Activated CD4-positive, alpha-beta T cell treated with anti-CD3 and anti-CD28 coated beads, Interleukin-2, amount 10 ng/mL, durations not matched to agents 24 days and 14 days (primary cell): ENCODE measurements at regions of chr9 and their contacts with region 1.

Region 1: DNA sequence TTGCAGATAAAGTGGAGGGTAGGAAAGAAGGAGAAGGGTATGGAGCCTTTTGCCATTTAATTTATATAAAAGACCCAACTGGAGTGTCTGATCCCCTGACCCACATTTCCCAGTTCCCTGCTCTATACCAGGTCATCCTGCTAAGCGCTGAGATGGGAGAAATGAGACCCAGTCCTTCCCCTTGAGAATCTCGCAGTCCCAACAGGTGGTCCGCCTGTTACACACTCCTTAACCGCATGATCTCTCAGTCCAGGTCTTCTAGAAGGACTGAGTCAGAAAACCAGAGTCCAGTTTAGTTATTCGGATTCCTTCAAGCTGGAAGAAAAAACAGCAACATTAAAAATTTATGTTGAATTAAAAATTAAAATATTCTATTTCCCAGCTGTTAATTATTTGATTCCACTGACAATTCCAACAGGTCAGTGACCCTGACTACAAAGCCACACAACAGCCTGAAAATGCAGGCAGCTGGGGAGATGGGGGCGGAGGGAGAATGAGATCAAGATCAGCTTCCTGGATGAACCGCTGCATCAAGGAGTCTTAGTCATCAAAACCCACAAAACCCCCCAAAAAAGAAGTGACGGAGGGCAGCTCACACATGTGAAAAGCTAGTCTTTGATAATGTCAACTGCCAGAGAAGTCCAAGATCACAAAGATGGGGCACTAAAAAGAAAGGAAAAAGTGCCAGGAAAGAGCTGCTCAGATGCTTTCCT is 44.0 kb downstream of the GGTA1 start:
- DNase-seq: peak; percentile 77
- H3K4me3 Mint-ChIP-seq: peak overlapping the region; percentile 34
- H3K27ac Mint-ChIP-seq: peak overlapping the region; percentile 41
- H3K4me1 Mint-ChIP-seq: peaks cover 21% of the 10 kb centered on the region
- H3K27me3 Mint-ChIP-seq: peaks cover 29% of the 10 kb centered on the region

Region 2: GRCh38 chr9:121233906-121234901 is 221.5 kb before region 1 on chr9:
- intact Hi-C with region 1: no loop called
- DNase-seq: no peak
- H3K4me3 Mint-ChIP-seq: no peak overlapping the region
- H3K27ac Mint-ChIP-seq: no peak overlapping the region
- H3K4me1 Mint-ChIP-seq: no peaks in the 10 kb centered on the region
- H3K27me3 Mint-ChIP-seq: peaks cover 2% of the 10 kb centered on the region

Region 3: GRCh38 chr9:121359351-121360294 is 96.1 kb before region 1 on chr9:
- intact Hi-C with region 1: loop called (anchors 5 kb)
- DNase-seq: no peak
- H3K4me3 Mint-ChIP-seq: peak overlapping the region; percentile 61
- H3K27ac Mint-ChIP-seq: peak overlapping the region; percentile 71
- H3K4me1 Mint-ChIP-seq: peaks cover 49% of the 10 kb centered on the region
- H3K27me3 Mint-ChIP-seq: no peaks in the 10 kb centered on the region

Region 4: DNA sequence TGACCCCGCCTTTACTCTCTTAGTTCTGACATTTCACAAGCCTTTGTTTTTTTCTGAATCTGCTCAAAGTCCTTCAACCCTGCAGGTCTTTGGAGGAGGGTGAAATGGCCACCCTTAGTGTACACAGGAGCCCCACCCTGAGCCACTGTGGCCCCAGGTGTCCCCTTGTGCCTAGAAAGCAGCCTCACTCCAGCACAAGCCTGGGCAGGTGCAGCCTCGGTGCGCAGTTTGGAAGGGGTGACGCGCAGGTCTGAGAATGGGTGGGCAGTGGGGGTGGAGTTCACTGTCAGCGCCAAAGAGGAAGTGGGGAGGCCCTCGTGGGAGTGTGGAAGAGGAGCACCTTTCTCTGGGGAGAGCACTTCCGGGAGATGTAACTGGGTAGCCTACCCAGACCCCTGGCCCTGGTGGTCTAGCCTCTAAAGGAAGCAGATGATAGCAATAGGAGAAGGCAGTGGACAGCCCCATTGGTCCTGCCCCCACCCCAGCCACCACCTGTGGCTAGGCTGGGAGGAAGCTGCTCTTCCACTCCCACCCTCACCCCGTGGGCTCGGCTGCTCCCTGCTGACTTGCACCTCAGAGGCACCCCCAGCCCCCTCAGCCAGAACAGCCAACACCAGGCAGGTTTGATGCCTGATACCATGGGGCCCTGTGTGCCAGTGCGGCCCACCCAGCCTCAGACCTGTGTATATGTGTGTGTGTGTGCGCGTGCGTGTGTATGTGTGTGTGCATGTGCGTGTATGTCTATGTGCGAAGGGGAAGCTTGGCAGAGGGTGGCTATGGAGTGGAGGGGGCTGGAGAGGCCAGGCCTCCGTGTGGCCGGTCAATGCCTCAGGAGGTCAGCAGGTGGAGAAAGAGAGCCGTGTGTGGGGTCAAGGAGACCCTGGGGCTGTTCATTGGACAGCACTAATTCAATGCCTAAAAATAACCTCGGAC is 178.9 kb after region 1 on chr9:
- intact Hi-C with region 1: no loop called
- DNase-seq: no peak
- H3K4me3 Mint-ChIP-seq: no peak overlapping the region
- H3K27ac Mint-ChIP-seq: no peak overlapping the region
- H3K4me1 Mint-ChIP-seq: peaks cover 5% of the 10 kb centered on the region
- H3K27me3 Mint-ChIP-seq: peaks cover 7% of the 10 kb centered on the region